ENCODE measurements at regions of chr12 and their contacts with region 1.

Region 1: GRCh38 chr12:111451649-111452129 is 46.0 kb downstream of the SH2B3 start:
- DNase-seq: peak; percentile 29 to 56
- ATAC-seq: peak in 1 of 2 experiments; percentile 34; a peak in 3 of 6 replicates
- H3K4me3 ChIP-seq: no peak overlapping the region
- H3K27ac ChIP-seq: no peak overlapping the region
- H3K4me1 ChIP-seq: no peaks in the 10 kb centered on the region
- CTCF ChIP-seq: peak; percentile 88
- EP300 ChIP-seq: no peak
- POLR2A ChIP-seq: no peak
- RAD21 ChIP-seq: peak; percentile 73

Region 2: GRCh38 chr12:111330800-111331752 is 120.6 kb before region 1 on chr12:
- CTCF ChIA-PET with region 1: interaction called, 39 read pairs
- POLR2A ChIA-PET with region 1: interaction called, 3 read pairs
- DNase-seq: peak; percentile 74 to 78
- ATAC-seq: peak; percentile 71 to 82
- H3K4me3 ChIP-seq: no peak overlapping the region
- H3K27ac ChIP-seq: no peak overlapping the region
- H3K4me1 ChIP-seq: no peaks in the 10 kb centered on the region
- CTCF ChIP-seq: peak; percentile 64
- EP300 ChIP-seq: no peak
- POLR2A ChIP-seq: no peak
- RAD21 ChIP-seq: peak; percentile 63 to 77; a peak in 4 of 5 replicates

Region 3: DNA sequence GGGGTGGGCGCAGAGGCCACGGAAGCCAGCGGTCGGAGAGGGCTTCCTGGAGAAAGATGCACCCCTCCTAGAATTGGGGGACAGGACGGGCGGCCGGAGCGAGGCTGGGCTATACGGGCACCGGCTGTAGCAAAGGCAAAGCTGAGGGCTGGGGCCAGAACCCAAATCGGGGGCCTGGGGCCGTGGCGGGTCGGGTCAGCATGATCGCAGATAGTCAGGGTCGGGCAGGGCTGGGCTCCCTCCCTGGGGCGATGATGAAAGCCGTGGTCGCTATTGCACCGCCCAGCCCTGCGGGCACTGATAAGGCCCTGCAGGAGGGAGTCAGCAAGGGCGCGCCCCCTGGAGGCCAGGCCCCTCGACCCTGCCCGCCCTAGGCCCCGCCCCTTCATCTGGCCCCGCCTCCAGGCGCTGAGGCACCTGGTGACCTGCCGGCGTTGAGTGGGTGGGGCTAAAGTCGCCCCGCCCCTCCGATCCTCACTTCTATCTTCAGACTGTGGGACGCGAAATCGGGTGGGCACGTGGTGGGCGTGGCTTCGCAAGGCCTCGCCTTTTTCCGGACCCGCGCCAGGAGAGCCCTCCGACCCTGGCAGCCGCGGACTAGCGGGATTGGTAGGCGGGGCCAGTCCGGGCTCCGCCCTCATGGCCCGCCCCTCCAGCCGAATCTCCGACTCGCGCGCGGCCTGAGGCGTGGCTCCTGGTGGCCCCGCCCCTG is 46.4 kb before region 1 on chr12:
- CTCF ChIA-PET with region 1: interaction called, 240 read pairs
- POLR2A ChIA-PET with region 1: no interaction called
- DNase-seq: peak; percentile 94 to 95
- ATAC-seq: peak; percentile 65 to 84
- H3K4me3 ChIP-seq: peak overlapping the region; percentile 63
- H3K27ac ChIP-seq: peak overlapping the region; percentile 83 to 89
- H3K4me1 ChIP-seq: peaks cover 30% of the 10 kb centered on the region
- CTCF ChIP-seq: peak; percentile 48
- EP300 ChIP-seq: no peak
- POLR2A ChIP-seq: no peak
- RAD21 ChIP-seq: no peak

Region 4: DNA sequence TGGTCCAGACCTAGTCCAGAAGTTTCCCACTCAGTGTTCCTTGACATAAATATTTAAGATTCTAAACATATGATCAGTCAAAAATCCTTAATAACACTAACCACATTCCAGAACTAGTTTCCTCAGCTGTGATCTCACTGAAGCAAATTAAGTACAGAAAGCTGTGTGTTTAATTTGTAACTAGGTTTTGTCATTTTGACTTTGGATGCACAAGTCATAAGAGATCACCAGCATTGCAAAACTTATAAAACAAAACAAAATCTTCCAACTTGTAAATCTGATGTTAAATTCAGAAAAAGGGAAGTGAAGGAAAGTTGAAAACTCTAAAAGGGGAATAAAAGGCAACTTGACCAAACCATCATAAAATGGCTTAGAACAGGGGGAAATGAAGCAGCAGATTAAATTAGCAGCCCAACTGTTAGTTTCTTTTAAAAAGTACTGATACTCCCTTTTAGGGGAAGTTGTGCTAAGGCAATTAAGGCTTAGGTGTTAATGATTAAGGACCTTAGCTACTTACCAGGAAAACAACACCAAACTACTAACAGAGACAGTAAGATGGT is 10.6 kb after region 1 on chr12:
- CTCF ChIA-PET with region 1: interaction called, 54 read pairs
- POLR2A ChIA-PET with region 1: no interaction called
- DNase-seq: no peak
- ATAC-seq: no peak
- H3K4me3 ChIP-seq: no peak overlapping the region
- H3K27ac ChIP-seq: no peak overlapping the region
- H3K4me1 ChIP-seq: peaks cover 14% of the 10 kb centered on the region
- CTCF ChIP-seq: no peak
- EP300 ChIP-seq: no peak
- POLR2A ChIP-seq: no peak
- RAD21 ChIP-seq: no peak

Region 5: DNA sequence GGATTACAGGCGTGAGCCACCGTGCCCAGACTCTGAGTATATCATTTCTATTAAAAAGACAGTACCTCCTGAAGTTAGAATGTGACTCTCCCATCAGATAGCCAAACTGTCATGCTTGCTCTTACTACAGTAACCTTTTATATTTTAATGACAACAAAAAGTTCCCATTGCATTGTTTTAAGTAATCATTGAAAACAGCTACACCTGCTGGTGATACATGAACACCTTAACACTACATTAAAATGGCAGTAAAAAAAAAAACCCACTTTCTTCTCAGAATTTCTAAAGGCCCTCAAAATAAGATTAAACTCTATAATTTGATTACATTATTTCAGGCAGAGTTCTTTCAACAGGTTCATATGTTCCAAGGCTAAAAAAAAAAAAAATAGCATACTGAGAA is 30.8 kb after region 1 on chr12:
- CTCF ChIA-PET with region 1: interaction called, 11 read pairs
- POLR2A ChIA-PET with region 1: no interaction called
- DNase-seq: no peak
- ATAC-seq: peak; percentile 43 to 54; a peak in 2 of 6 replicates
- H3K4me3 ChIP-seq: no peak overlapping the region
- H3K27ac ChIP-seq: no peak overlapping the region
- H3K4me1 ChIP-seq: 0 out of 3 replicates have a peak, but pooled peaks cover under 1% of the 10 kb centered on the region
- CTCF ChIP-seq: peak; percentile 14; the same call in 1 of the 3 replicates
- EP300 ChIP-seq: no peak
- POLR2A ChIP-seq: no peak
- RAD21 ChIP-seq: no peak